Endothelial cell of umbilical vein (primary cell): ENCODE measurements at regions of chr17 and their contacts with region 1.

Region 1: DNA sequence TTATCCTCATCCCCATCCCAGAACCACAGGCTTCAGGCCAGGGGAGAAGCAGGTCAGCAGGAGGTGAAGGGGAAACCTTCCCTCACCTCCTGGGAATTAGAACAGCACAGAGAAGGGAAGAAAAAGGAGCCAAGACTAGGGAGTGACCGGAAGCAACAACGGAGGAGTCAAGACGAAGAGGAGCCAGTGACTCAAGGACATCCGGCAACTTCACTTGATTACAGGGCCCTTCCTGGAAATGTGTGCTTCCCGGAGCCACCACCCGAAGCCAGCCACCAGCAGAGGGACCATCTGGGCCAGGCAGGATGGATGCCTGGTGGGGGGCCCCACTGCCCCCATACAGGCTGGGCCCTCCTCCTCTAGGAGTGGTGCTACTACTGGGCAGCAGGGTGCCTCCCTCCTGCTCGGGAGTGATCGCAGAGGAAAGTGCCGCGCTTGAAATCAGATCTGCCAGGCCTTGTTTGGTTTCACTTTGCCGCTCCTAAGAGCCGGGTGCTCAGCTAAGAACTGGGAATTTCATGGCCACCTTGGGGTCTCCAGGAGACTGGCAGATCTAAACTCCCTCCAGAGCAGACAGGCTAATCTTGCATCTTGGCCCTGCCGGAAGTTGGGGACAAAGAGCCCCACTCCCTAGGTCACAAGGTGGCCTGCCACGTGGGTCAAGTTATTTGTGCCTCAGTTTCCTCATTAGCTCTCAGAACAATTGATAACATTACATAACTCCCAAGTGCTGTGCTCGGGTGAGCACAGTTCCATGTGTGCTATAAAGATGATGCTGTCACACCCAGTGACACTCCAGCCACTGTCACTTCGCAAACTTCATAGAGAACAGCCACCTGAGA is 6.6 kb downstream of the CDC42EP4 start:
- DNase-seq: peak; percentile 80
- H3K4me3 ChIP-seq: peak overlapping the region in 2 of 3 experiments; percentile 20 to 54
- H3K27ac ChIP-seq: peak overlapping the region; percentile 78
- H3K4me1 ChIP-seq: peaks cover 54% of the 10 kb centered on the region
- H3K27me3 ChIP-seq: no peaks in the 10 kb centered on the region
- CTCF ChIP-seq: peak; percentile 31 to 40
- POLR2A ChIP-seq: peak; percentile 58

Region 2: GRCh38 chr17:72901083-72901482 is 404.1 kb before region 1 on chr17:
- CTCF ChIA-PET with region 1: interaction called, 3 read pairs
- POLR2A ChIA-PET with region 1: no interaction called
- dilution Hi-C with region 1: no loop called
- intact Hi-C with region 1: loop called (anchors 10 kb)
- DNase-seq: peak; percentile 87
- H3K4me3 ChIP-seq: no peak overlapping the region
- H3K27ac ChIP-seq: peak overlapping the region; percentile 27
- H3K4me1 ChIP-seq: peaks cover 16% of the 10 kb centered on the region
- H3K27me3 ChIP-seq: no peaks in the 10 kb centered on the region
- CTCF ChIP-seq: no peak
- POLR2A ChIP-seq: no peak

Region 3: DNA sequence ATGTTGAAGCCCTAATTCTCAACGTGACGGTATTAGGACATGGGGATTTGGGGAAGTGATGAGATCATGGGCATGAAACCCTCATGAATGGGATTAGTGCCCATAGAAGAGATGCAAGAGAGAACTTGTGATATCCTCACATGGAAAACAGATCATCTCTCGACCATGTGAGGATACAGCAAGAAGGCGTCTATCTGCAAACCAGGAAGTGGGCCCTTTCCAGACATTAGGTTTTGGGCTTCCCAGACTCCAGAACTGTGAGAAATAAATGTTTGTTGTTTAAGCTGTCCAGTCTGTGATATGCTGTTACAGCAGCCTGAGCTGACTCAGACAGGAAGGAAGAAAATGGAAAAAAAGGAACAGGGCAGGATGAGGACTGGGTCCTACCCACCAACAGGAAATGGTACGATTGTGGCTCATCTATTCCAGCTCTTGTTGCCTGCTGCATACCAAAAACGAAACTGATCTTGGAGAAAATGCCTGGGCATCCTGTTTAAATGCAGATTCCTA is 162.3 kb before region 1 on chr17:
- CTCF ChIA-PET with region 1: no interaction called
- POLR2A ChIA-PET with region 1: no interaction called
- dilution Hi-C with region 1: no loop called
- intact Hi-C with region 1: no loop called
- DNase-seq: peak; percentile 30
- H3K4me3 ChIP-seq: no peak overlapping the region
- H3K27ac ChIP-seq: no peak overlapping the region
- H3K4me1 ChIP-seq: peaks cover 9% of the 10 kb centered on the region
- H3K27me3 ChIP-seq: peaks cover 0 to 4% of the 10 kb centered on the region in 2 experiments
- CTCF ChIP-seq: no peak
- POLR2A ChIP-seq: no peak

Region 4: GRCh38 chr17:73291260-73291801 is 13.9 kb before region 1 on chr17:
- CTCF ChIA-PET with region 1: interaction called, 17 read pairs
- POLR2A ChIA-PET with region 1: no interaction called
- dilution Hi-C with region 1: no loop called
- intact Hi-C with region 1: loop called (anchors 1 kb)
- DNase-seq: peak; percentile 18
- H3K4me3 ChIP-seq: no peak overlapping the region
- H3K27ac ChIP-seq: peak overlapping the region; percentile 79
- H3K4me1 ChIP-seq: peaks cover 25% of the 10 kb centered on the region
- H3K27me3 ChIP-seq: no peaks in the 10 kb centered on the region
- CTCF ChIP-seq: no peak
- POLR2A ChIP-seq: no peak